ENCODE measurements at regions of chr3 and their contacts with region 1.

Region 1: DNA sequence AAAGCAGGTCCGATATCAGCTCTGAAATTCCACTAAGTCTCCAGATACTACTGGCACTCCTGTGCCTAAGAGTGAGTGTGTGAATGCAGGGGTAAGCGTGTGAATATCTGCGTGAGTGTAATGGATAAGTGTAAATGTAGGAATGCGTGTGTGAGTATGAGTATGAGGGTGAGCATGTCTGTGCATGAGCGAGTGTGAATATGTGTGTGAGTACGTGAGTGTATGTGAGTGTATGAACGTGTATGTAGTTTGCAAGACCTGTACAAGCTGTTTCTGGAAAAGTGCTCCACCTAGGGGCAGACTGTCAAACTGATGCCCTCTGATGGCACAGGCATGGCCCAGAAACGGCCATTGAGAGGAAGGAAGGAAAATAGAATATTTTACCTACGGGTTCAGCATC is 24.4 kb upstream of the FRMD4B start:
- DNase-seq: peak; percentile 78
- H3K4me3 ChIP-seq: no peak overlapping the region
- H3K27ac ChIP-seq: no peak overlapping the region
- H3K27me3 ChIP-seq: no peaks in the 10 kb centered on the region
- CTCF ChIP-seq: peak; percentile 94

Region 2: DNA sequence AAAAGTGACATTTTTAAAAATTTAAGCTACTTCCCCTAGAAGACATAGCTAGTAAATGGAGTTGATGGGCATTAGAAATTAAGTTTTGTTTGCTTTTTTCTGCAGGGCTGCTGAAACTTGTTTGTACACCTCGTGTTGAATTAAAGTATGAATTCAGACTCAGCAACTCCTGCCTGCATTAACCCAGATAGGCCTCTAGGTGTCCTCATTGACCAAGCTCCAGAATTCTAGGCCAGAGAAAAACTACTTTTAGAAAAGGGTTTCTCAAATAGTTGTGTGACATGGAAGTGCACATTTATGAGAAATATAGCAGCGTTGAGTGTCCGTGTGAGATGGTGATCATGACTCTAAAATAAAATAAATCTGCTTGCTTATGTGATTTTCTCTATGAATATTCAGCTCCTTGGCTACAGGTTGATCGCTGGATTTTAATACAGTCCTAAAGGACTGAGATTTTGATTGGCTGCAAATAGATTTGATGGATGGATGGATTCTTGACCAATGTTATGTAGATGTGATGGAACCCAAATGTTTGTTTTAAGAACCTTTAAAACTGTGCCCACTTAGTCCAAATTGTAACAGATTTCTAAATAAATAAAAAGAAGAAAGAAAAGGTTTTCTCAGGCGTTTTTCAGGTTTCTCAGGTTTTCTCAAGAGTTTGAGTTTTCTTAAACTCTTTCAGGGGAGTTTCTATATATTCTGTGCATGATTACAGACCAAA is 248.5 kb before region 1 on chr3:
- in situ Hi-C with region 1: loop called (anchors 25 kb)
- DNase-seq: peak; percentile 51
- H3K4me3 ChIP-seq: no peak overlapping the region
- H3K27ac ChIP-seq: no peak overlapping the region
- H3K27me3 ChIP-seq: no peaks in the 10 kb centered on the region
- CTCF ChIP-seq: peak; percentile 89

Region 3: GRCh38 chr3:69306239-69307185 is 103.7 kb before region 1 on chr3:
- in situ Hi-C with region 1: loop called (anchors 25 kb)
- DNase-seq: peak; percentile 84
- H3K4me3 ChIP-seq: no peak overlapping the region
- H3K27ac ChIP-seq: no peak overlapping the region
- H3K27me3 ChIP-seq: no peaks in the 10 kb centered on the region
- CTCF ChIP-seq: peak; percentile 94